Activated naive CD4-positive, alpha-beta T cell treated with anti-CD3 and anti-CD28 coated beads for 36 hours (primary cell): ENCODE measurements at regions of chr2 and their contacts with region 1.

Region 1: GRCh38 chr2:16608661-16609643 is 56.7 kb downstream of the CYRIA start:
- DNase-seq: peak; percentile 93
- H3K4me3 Mint-ChIP-seq: peak overlapping the region; percentile 78
- H3K27ac Mint-ChIP-seq: no peak overlapping the region
- H3K4me1 Mint-ChIP-seq: no peaks in the 10 kb centered on the region
- H3K27me3 Mint-ChIP-seq: peaks cover 9% of the 10 kb centered on the region

Region 2: GRCh38 chr2:16281451-16282336 is 327.3 kb before region 1 on chr2:
- CTCF ChIA-PET with region 1: no interaction called
- intact Hi-C with region 1: loop called (anchors 10 kb)
- DNase-seq: peak; percentile 16
- H3K4me3 Mint-ChIP-seq: no peak overlapping the region
- H3K27ac Mint-ChIP-seq: no peak overlapping the region
- H3K4me1 Mint-ChIP-seq: no peaks in the 10 kb centered on the region
- H3K27me3 Mint-ChIP-seq: peaks cover 2% of the 10 kb centered on the region

Region 3: DNA sequence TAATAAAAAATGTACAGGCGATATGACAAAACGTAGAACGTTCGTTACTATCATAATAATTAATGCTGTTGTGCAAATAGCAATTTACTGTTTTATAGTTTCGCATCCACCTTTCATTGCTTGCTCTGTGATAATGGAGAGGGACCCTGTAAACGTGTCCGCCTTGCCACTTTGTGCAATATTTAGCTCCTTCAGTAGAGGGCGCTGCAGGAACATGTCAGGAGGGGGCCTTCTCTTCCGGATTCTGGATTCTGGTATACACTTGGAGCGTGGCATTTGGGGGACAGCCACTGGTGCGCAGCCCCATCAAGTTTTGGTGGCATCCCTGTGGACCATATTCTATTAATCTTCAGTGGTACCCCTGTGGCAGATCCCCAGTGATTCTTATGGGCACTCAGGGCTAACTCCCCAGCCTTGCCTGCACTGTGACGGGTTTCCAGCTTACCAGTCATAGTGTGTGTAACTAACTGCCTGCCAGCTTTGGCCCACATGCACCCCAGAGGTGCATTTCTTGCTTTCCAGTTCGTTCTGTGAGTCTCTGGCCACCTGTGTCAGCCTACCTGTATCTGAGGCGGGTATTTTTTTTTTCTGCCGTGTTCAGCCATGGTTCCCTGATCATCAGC is 83.6 kb before region 1 on chr2:
- CTCF ChIA-PET with region 1: interaction called, 8 read pairs
- intact Hi-C with region 1: loop called (anchors 1 kb)
- DNase-seq: peak; percentile 51
- H3K4me3 Mint-ChIP-seq: no peak overlapping the region
- H3K27ac Mint-ChIP-seq: no peak overlapping the region
- H3K4me1 Mint-ChIP-seq: no peaks in the 10 kb centered on the region
- H3K27me3 Mint-ChIP-seq: peaks cover 20% of the 10 kb centered on the region

Region 4: GRCh38 chr2:16553226-16553625 is 55.7 kb before region 1 on chr2:
- CTCF ChIA-PET with region 1: interaction called, 13 read pairs
- intact Hi-C with region 1: loop called (anchors 1 kb)
- DNase-seq: peak; percentile 31
- H3K4me3 Mint-ChIP-seq: no peak overlapping the region
- H3K27ac Mint-ChIP-seq: no peak overlapping the region
- H3K4me1 Mint-ChIP-seq: no peaks in the 10 kb centered on the region
- H3K27me3 Mint-ChIP-seq: peaks cover 3% of the 10 kb centered on the region

Region 5: DNA sequence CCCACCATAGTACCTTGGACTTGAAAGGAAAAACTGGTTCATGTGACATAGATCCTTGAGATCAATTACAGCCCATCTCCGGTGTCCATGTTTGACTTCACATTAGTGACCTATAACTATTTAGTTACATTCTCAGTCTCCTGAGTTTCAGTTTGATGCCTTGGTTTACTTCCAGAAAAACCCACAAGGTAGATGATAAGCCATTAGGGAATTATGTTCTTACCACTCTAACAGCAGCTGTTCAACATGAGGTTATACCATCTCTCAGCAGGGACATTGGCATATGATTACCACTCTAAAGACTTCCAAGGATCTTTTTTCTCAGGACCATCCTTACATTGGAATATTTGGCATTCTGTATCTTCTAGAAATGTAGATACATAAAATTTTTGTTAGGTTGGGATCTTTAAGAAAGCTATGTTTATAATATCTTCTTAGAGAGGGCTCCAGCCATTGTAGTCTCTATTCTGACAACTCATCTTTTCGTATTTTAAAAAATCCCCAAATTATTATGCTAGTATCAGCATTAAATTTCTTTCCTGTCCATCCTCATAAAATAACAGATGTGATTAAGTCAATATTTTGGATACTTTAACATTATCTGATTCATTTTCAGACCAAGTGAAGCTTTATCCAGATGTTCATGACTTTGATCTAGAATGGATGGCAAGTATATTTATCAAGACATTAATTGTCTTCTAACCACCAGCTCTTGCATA is 1692.6 kb after region 1 on chr2:
- CTCF ChIA-PET with region 1: no interaction called
- intact Hi-C with region 1: no loop called
- DNase-seq: no peak
- H3K4me3 Mint-ChIP-seq: no peak overlapping the region
- H3K27ac Mint-ChIP-seq: no peak overlapping the region
- H3K4me1 Mint-ChIP-seq: no peaks in the 10 kb centered on the region
- H3K27me3 Mint-ChIP-seq: peaks cover 4% of the 10 kb centered on the region